GM12878 (cell line): ENCODE measurements at regions of chr7 and their contacts with region 1.

Region 1: GRCh38 chr7:94449148-94449725 is 54.5 kb downstream of the COL1A2 start:
- DNase-seq: peak; percentile 8
- ATAC-seq: peak; percentile 68
- H3K4me3 ChIP-seq: no peak overlapping the region
- H3K27ac ChIP-seq: no peak overlapping the region
- H3K4me1 ChIP-seq: no peaks in the 10 kb centered on the region
- H3K27me3 ChIP-seq: no peaks in the 10 kb centered on the region; a peak in 1 of 4 replicates
- CTCF ChIP-seq: peak; percentile 47 to 61 (median 52); a peak in 5 of 6 replicates
- EP300 ChIP-seq: no peak
- POLR2A ChIP-seq: no peak
- RAD21 ChIP-seq: peak; percentile 94

Region 2: GRCh38 chr7:94374231-94374630 is 75.0 kb before region 1 on chr7:
- CTCF ChIA-PET with region 1: no interaction called
- POLR2A ChIA-PET with region 1: no interaction called
- RAD21 ChIA-PET with region 1: no interaction called
- SMC1A ChIA-PET with region 1: no interaction called
- in situ Hi-C with region 1: no loop called
- intact Hi-C with region 1: no loop called
- DNase-seq: no peak
- ATAC-seq: no peak
- H3K4me3 ChIP-seq: no peak overlapping the region
- H3K27ac ChIP-seq: no peak overlapping the region
- H3K4me1 ChIP-seq: no peaks in the 10 kb centered on the region
- H3K27me3 ChIP-seq: no peaks in the 10 kb centered on the region
- CTCF ChIP-seq: no peak
- EP300 ChIP-seq: no peak
- POLR2A ChIP-seq: no peak
- RAD21 ChIP-seq: no peak

Region 3: GRCh38 chr7:94492596-94492995 is 43.4 kb after region 1 on chr7:
- CTCF ChIA-PET with region 1: interaction called, 11 read pairs
- POLR2A ChIA-PET with region 1: no interaction called
- RAD21 ChIA-PET with region 1: interaction called, 6 read pairs
- SMC1A ChIA-PET with region 1: interaction called, 3 read pairs
- in situ Hi-C with region 1: no loop called
- intact Hi-C with region 1: no loop called
- DNase-seq: peak; percentile 35
- ATAC-seq: peak; percentile 99
- H3K4me3 ChIP-seq: no peak overlapping the region
- H3K27ac ChIP-seq: no peak overlapping the region
- H3K4me1 ChIP-seq: no peaks in the 10 kb centered on the region
- H3K27me3 ChIP-seq: no peaks in the 10 kb centered on the region
- CTCF ChIP-seq: no peak
- EP300 ChIP-seq: 0 out of 4 replicates have a peak, but pooled peaks of 1 of the 2 experiments have one; percentile 45
- POLR2A ChIP-seq: no peak
- RAD21 ChIP-seq: no peak

Region 4: GRCh38 chr7:94657771-94658693 is 208.8 kb after region 1 on chr7:
- CTCF ChIA-PET with region 1: interaction called, 45 read pairs
- POLR2A ChIA-PET with region 1: interaction called, 3 read pairs
- RAD21 ChIA-PET with region 1: interaction called, 92 read pairs
- SMC1A ChIA-PET with region 1: interaction called, 57 read pairs
- in situ Hi-C with region 1: no loop called
- intact Hi-C with region 1: loop called (anchors 1 kb)
- DNase-seq: peak; percentile 83
- ATAC-seq: peak; percentile 88
- H3K4me3 ChIP-seq: no peak overlapping the region
- H3K27ac ChIP-seq: no peak overlapping the region
- H3K4me1 ChIP-seq: no peaks in the 10 kb centered on the region; the same call in 1 of the 2 replicates
- H3K27me3 ChIP-seq: no peaks in the 10 kb centered on the region
- CTCF ChIP-seq: peak in 1 of 3 experiments; percentile 16; a peak in 1 of 6 replicates
- EP300 ChIP-seq: no peak
- POLR2A ChIP-seq: peak; percentile 56; the same call in 1 of the 2 replicates
- RAD21 ChIP-seq: no peak

Region 5: GRCh38 chr7:95199779-95200558 is 750.7 kb after region 1 on chr7:
- CTCF ChIA-PET with region 1: interaction called, 56 read pairs
- POLR2A ChIA-PET with region 1: no interaction called
- RAD21 ChIA-PET with region 1: interaction called, 28 read pairs
- SMC1A ChIA-PET with region 1: interaction called, 30 read pairs
- in situ Hi-C with region 1: no loop called
- intact Hi-C with region 1: loop called (anchors 1 kb)
- DNase-seq: no peak
- ATAC-seq: peak; percentile 85
- H3K4me3 ChIP-seq: no peak overlapping the region
- H3K27ac ChIP-seq: no peak overlapping the region
- H3K4me1 ChIP-seq: no peaks in the 10 kb centered on the region
- H3K27me3 ChIP-seq: no peaks in the 10 kb centered on the region
- CTCF ChIP-seq: peak; percentile 52 to 64 (median 62)
- EP300 ChIP-seq: no peak
- POLR2A ChIP-seq: no peak
- RAD21 ChIP-seq: peak; percentile 75

Region 6: DNA sequence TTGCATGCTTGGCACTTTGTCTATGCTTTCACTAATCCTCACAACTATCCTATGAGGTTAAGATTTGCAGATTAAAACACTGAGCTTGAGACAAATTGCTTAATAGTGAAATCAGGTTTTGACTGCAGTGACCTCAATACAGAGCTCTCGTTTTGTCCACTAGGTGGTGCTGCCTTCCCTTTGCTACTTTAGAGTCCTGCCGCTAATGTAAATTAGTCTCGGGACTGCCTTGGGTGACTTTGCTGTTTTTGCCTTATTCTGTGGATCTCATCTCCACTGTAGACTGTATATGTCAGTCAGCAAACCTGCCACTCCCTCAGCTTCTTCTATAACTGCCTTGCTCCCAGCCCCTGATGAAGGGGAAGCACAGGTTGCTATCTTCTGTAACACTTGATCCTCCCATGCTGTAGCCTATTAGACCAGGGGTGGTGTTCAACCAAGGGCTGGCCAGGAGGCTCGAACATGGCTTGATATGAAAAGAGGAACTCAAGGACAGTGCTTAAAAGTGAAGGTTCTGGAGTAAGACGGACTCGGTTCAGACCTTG is 1062.6 kb after region 1 on chr7:
- CTCF ChIA-PET with region 1: interaction called, 16 read pairs
- POLR2A ChIA-PET with region 1: no interaction called
- RAD21 ChIA-PET with region 1: interaction called, 5 read pairs
- SMC1A ChIA-PET with region 1: interaction called, 3 read pairs
- in situ Hi-C with region 1: no loop called
- intact Hi-C with region 1: no loop called
- DNase-seq: no peak
- ATAC-seq: peak; percentile 95
- H3K4me3 ChIP-seq: no peak overlapping the region
- H3K27ac ChIP-seq: no peak overlapping the region
- H3K4me1 ChIP-seq: no peaks in the 10 kb centered on the region
- H3K27me3 ChIP-seq: no peaks in the 10 kb centered on the region
- CTCF ChIP-seq: peak; percentile 78 to 88 (median 83)
- EP300 ChIP-seq: no peak
- POLR2A ChIP-seq: no peak
- RAD21 ChIP-seq: peak; percentile 72